Transverse colon (tissue), 4 donors: ENCODE measurements at regions of chr3 and their contacts with region 1.

Region 1: DNA sequence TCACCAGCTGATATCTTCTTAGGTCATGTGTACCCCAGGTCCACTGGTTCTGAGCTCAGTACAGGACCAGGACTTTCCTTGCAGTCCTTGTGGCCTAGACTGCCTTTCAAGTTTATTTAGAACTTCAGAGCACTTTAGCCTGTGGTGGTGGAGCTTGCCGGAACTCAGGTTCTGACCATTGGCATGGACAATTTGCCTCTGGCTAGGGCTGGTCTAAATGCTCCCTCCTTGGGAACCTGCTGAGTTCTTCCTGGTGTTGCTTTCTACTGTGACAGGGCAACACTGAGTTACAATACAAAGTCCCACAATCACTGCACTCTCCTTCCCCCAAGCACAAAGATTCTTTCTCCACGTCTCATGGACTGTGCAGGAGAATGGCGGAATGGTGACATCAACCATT is 780.0 kb downstream of the FHIT start:
- DNase-seq: no peak
- H3K4me3 ChIP-seq: no peak overlapping the region
- H3K27ac ChIP-seq: no peak overlapping the region
- H3K4me1 ChIP-seq: no peaks in the 10 kb centered on the region
- H3K27me3 ChIP-seq: no peaks in the 10 kb centered on the region
- CTCF ChIP-seq: no peak
- EP300 ChIP-seq: no peak
- POLR2A ChIP-seq: no peak

Region 2: DNA sequence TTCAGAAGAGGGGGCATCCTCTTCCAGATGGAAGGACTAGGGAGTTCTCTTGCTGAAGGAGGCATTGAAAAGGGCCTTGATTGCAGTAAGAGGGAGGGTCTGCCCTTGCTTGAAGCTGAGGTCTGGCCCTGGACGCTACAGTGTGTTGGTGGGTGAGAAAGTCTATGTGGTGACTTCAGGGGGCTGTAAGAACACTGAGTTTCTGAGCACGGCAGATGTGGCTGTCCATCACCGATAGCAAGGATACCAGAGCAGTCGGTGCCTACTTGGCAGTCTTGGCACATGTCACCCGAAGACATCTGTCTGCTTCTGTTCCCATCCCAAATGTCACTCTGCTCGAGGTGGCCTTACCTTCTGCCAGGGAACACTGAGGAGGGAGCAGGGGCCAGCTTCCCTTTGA is 790.3 kb before region 1 on chr3:
- in situ Hi-C with region 1: no loop called
- intact Hi-C with region 1: loop called (anchors 5 kb)
- DNase-seq: no peak
- H3K4me3 ChIP-seq: no peak overlapping the region
- H3K27ac ChIP-seq: no peak overlapping the region
- H3K4me1 ChIP-seq: no peaks in the 10 kb centered on the region
- H3K27me3 ChIP-seq: no peaks in the 10 kb centered on the region
- CTCF ChIP-seq: no peak
- EP300 ChIP-seq: no peak
- POLR2A ChIP-seq: no peak

Region 3: GRCh38 chr3:61979638-61980037 is 1508.4 kb after region 1 on chr3:
- in situ Hi-C with region 1: no loop called
- intact Hi-C with region 1: loop called (anchors 5 kb)
- DNase-seq: no peak
- H3K4me3 ChIP-seq: no peak overlapping the region
- H3K27ac ChIP-seq: peak overlapping the region in 1 of 4 donors; percentile 15
- H3K4me1 ChIP-seq: peaks cover 0 to 9% (median 2%) of the 10 kb centered on the region in 4 donors
- H3K27me3 ChIP-seq: no peaks in the 10 kb centered on the region
- CTCF ChIP-seq: no peak
- EP300 ChIP-seq: no peak
- POLR2A ChIP-seq: no peak